Activated naive CD4-positive, alpha-beta T cell treated with anti-CD3 and anti-CD28 coated beads for 36 hours (primary cell): ENCODE measurements at regions of chr16 and their contacts with region 1.

Region 1: DNA sequence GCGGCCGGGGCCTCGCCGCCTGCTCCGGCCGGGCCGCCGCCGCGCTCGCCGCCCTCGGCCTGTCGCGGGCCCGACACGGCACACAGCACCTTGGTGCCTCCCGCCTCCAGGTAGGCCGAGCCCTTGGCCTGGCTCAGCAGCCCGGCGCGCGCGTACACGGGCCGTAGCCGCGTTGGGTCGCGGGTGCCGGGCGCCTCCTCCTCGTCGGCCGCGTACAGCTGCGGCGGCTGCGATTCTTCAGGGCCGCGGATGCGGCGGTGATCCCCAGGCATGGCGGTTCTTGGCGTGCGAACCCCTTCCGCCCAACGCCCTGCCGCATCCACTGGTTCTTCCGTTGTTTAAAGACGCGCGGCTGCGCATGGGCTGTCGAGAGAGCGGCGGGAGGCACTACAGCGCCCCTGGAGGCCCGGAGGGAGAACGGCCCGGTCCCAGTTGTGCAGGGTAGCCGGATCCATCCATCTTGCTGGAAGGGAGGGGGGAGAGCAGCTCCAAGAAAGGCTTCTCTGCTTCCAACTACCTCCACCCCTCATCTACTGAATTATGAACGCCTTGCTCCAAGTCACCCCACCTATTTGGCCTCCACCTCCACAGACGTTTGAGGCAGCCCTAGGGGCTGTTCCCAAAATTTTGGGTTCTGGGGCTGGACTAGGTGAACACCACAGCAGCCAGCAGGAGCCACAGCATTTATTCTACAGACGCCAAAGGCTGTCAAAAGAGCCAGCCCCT is at the start of gene EXOSC6:
- DNase-seq: peak; percentile 96
- H3K4me3 Mint-ChIP-seq: peak within 1 kb of the TSS; percentile 86
- H3K27ac Mint-ChIP-seq: peak within 1 kb of the TSS; percentile 93
- H3K4me1 Mint-ChIP-seq: peaks cover 24% of the 10 kb centered on the region
- H3K27me3 Mint-ChIP-seq: no peaks in the 10 kb centered on the region
- total RNA-seq, gene EXOSC6: 20.3 to 21.0 TPM

Region 2: DNA sequence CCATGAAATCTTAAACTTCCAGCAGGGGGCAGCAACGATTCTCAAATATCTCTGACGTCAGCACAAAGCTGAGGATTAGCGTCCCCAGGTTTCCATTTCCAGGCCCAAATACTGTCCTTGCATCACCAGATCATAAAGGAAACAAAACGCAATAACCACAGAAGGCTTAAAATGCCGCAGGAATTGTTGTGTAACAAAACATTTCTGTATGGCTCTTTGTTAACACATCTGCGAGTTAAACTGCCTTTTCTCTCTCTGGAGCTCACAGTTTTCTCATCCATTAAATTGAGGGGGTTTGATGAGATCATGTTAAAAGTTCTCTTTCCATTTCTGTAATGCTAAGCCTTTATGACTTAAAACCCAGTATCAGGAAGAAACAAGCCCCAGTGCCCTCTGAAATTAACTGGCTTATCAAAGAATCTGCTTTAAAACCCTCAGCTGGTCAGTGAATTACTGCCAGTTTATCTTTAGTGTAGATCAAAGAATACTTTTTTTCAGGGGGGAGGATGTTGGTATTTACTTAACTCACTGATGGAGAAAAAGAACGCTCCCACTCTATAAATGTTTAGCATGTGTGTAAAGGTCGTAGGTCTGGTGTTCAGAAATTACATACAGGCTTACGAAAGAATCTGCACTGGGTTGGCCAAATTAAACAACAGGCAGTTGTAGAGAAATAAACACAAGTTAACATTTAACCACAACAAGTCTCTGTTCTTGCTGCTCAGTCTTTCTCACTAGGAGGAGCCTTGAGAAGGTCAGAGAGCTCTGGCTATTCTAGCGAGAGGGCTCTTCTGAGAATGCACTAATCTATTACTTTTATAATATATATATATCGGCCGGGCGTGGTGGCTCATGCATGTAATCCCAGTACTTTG is 855.4 kb before region 1 on chr16:
- CTCF ChIA-PET with region 1: no interaction called
- intact Hi-C with region 1: no loop called
- DNase-seq: peak; percentile 87
- H3K4me3 Mint-ChIP-seq: no peak overlapping the region
- H3K27ac Mint-ChIP-seq: peak overlapping the region; percentile 62
- H3K4me1 Mint-ChIP-seq: peaks cover 20% of the 10 kb centered on the region
- H3K27me3 Mint-ChIP-seq: peaks cover 4% of the 10 kb centered on the region

Region 3: GRCh38 chr16:70267516-70267915 is 15.7 kb after region 1 on chr16:
- CTCF ChIA-PET with region 1: interaction called, 12 read pairs
- intact Hi-C with region 1: no loop called
- DNase-seq: peak; percentile 37
- H3K4me3 Mint-ChIP-seq: no peak overlapping the region
- H3K27ac Mint-ChIP-seq: no peak overlapping the region
- H3K4me1 Mint-ChIP-seq: no peaks in the 10 kb centered on the region
- H3K27me3 Mint-ChIP-seq: no peaks in the 10 kb centered on the region

Region 4: GRCh38 chr16:70289229-70290098 is 37.7 kb after region 1 on chr16 and contains the start of gene AARS1:
- CTCF ChIA-PET with region 1: interaction called, 7 read pairs
- intact Hi-C with region 1: loop called (anchors 1 kb)
- DNase-seq: peak; percentile 98
- H3K4me3 Mint-ChIP-seq: peak within 1 kb of the TSS; percentile 99
- H3K27ac Mint-ChIP-seq: peak within 1 kb of the TSS; percentile 99
- H3K4me1 Mint-ChIP-seq: peaks cover 34% of the 10 kb centered on the region
- H3K27me3 Mint-ChIP-seq: no peaks in the 10 kb centered on the region
- total RNA-seq, gene AARS1: 237 to 238 TPM

Region 5: DNA sequence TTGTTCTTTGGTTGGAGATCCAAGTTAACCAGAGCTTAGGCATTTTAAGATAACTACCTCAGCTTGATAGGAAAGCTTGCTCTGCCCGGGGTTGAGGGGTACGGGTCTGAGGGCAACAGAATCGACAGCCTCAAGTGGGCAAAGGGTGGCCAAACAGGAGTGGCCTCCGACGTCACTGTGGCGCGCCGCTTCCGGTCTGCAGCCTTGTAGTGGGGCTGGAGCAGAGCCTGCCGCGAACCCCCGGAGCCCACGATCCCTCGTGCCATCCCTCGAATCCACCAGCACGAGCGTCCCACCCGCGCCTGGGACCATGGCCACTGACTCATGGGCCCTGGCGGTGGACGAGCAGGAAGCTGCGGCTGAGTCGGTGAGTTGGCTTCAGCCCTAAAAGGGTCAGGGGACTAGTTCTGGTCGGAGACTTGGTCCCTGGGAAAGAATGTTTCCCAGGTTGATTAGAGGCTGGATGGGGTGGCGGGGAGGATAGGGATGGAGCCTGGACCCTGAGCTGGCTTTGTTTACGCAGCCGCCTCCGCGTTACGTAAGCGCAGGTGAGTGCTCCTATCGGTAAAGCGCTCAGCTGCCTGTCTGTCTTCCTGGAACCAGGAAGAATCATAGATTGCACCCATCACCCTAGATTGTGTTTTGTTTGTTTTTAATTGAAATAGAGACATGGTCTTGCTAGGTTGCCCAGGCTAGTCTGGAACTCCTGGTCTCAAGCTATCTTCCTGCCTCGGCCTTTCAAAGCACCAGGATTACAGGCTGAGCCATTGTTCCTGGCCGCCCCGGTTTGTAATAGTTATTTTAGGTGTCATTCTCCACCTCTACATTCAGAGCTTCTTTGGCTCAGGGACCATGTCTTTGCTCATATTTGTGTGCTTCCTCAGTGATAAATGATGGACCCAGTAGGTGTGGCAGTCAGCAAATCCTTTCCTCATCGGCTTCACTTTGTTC is 47.5 kb after region 1 on chr16 and contains the start of gene DDX19B:
- CTCF ChIA-PET with region 1: interaction called, 14 read pairs
- intact Hi-C with region 1: no loop called
- DNase-seq: peak; percentile 78
- H3K4me3 Mint-ChIP-seq: peak within 1 kb of the TSS; percentile 89
- H3K27ac Mint-ChIP-seq: peak within 1 kb of the TSS; percentile 92
- H3K4me1 Mint-ChIP-seq: peaks cover 41% of the 10 kb centered on the region
- H3K27me3 Mint-ChIP-seq: no peaks in the 10 kb centered on the region
- total RNA-seq, gene DDX19B: 28.7 to 31.3 TPM

Region 6: DNA sequence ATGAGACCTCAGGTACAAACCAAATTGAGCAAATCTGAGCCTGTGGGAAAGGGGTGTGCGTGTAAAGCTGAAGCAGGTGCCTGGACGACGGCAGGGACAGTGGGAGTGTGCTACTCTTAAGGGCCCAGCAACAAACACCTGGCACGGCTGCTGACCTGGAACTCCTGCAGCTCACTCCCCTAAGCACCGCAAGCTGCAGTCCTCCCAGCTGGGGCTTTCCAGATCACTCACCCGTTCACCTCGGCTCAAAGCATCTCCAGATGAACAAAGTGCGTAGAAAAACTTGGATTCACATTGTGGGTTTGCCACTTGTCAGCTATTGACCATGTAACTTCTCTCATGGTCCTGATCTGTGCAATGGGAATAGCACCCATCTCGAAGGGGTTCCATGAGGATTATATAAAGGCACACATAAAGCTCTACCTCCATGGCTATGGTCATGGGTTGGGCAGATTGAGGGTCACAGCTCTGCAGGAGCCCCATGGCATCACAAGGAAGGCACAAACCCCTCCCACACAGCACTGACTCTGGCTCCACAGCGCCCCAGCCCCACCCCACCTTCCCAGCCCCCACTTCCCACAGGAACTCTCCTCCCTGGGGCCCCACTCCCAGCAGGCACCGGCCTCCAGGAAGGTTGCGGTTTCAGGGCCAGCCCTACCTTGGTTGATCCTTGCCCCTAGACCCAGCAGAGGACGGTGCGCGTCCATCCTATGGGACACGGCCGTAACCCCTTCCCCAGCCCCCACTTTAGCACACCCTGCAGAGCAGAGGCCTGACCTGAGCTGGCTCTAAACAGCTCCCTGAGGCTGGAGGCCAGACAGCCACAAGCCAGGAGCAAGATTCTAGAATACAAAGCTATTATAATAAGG is 165.2 kb after region 1 on chr16:
- CTCF ChIA-PET with region 1: no interaction called
- intact Hi-C with region 1: no loop called
- DNase-seq: no peak
- H3K4me3 Mint-ChIP-seq: no peak overlapping the region
- H3K27ac Mint-ChIP-seq: no peak overlapping the region
- H3K4me1 Mint-ChIP-seq: peaks cover 33% of the 10 kb centered on the region
- H3K27me3 Mint-ChIP-seq: no peaks in the 10 kb centered on the region

Region 7: DNA sequence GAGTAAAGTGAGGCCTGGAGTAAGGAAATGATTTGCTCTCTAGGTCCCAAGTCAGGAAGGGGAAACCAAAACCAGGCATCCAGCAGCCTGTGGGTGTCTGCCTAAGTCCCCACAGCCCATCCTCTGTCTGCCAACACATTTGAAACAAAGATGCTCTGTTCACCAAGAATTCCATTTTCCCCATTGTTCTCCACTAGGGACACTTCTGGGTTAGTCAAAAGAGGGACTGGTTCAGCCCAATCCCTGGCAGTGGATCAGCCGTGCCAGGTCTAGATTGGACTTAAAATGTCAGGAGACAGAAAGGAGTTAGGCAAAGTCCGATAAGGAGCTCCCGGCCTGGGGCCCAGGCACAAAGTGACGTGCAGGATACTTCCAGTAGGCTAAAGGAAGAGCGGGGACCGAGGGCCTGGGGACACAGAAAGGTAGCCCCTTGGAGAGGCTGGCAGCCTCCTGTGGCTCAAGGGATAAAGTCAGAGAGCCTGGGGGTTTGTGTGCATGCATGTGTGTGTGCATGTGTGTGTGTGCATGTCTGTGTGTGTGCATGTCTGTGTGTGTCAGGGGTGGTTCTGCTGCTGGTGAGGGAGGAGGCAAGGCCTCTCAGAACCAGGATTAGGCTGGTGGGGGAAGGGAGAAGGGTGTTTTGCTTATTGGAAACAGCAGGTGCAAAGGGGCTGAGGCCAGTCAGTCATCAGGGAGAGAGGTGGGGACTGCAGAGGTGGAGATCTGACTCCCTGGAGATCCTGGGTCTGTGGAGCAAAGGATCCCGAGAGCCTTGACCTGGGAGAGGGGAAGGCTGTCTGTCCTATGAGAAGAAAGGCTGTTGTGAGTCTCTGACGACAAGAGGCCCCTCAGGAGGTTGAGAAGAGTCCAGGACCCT is 352.9 kb after region 1 on chr16:
- CTCF ChIA-PET with region 1: no interaction called
- intact Hi-C with region 1: no loop called
- DNase-seq: no peak
- H3K4me3 Mint-ChIP-seq: no peak overlapping the region
- H3K27ac Mint-ChIP-seq: no peak overlapping the region
- H3K4me1 Mint-ChIP-seq: no peaks in the 10 kb centered on the region
- H3K27me3 Mint-ChIP-seq: no peaks in the 10 kb centered on the region